ENCODE measurements at regions of chr17 and their contacts with region 1.

Region 1: GRCh38 chr17:81359218-81359617 is 36.0 kb upstream of the BAHCC1 start:
- DNase-seq: no peak
- ATAC-seq: no peak
- H3K4me3 Mint-ChIP-seq: no peak overlapping the region
- H3K27ac Mint-ChIP-seq: no peak overlapping the region
- H3K4me1 Mint-ChIP-seq: no peaks in the 10 kb centered on the region
- H3K27me3 Mint-ChIP-seq: peaks cover 36% of the 10 kb centered on the region
- CTCF ChIP-seq: no peak

Region 2: DNA sequence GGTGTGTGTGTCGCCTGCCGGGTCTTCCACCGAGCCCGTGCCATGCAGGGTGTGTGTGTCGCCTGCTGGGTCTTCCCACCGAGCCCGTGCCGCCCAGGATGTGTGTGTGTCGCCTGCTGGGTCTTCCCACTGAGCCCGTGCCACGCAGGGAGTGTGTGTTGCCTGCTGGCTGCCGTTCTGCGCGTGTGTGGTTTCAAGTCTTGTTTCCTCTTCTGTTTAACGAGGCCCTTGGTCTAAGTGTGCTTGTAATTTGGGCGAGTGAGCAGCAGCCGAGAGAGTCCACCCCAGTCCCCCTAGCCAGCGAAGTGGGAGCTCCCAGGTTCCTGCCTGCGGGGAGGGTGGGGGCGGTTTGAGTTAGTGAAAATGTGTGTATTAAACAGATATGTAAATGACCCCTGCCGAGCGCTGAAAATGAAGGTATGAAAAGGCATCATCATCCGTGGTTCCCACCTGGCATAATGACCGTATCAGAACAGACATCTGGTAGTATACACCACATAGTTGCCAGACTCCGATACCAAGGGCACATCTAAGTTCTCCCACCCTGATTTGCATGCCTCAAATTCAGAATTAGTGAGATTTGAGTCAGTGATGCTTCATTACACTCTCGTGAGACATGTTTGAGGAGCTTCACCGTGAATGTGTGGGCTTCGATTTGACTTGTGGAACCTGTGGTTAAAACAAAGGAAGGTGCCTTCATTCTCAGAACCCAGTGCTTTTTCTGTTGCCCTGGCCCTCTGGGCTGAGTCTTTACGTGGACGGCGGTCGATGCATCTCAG is 482.1 kb before region 1 on chr17:
- CTCF ChIA-PET with region 1: no interaction called
- POLR2A ChIA-PET with region 1: no interaction called
- intact Hi-C with region 1: no loop called
- DNase-seq: peak; percentile 54
- ATAC-seq: peak; percentile 91
- H3K4me3 Mint-ChIP-seq: peak overlapping the region; percentile 72
- H3K27ac Mint-ChIP-seq: peak overlapping the region; percentile 94
- H3K4me1 Mint-ChIP-seq: peaks cover 30% of the 10 kb centered on the region
- H3K27me3 Mint-ChIP-seq: no peaks in the 10 kb centered on the region
- CTCF ChIP-seq: no peak

Region 3: GRCh38 chr17:81347437-81347836 is 11.8 kb before region 1 on chr17:
- CTCF ChIA-PET with region 1: no interaction called
- POLR2A ChIA-PET with region 1: no interaction called
- intact Hi-C with region 1: no loop called
- DNase-seq: no peak
- ATAC-seq: no peak
- H3K4me3 Mint-ChIP-seq: no peak overlapping the region
- H3K27ac Mint-ChIP-seq: no peak overlapping the region
- H3K4me1 Mint-ChIP-seq: peaks cover 20% of the 10 kb centered on the region
- H3K27me3 Mint-ChIP-seq: peaks cover 22% of the 10 kb centered on the region
- CTCF ChIP-seq: no peak

Region 4: DNA sequence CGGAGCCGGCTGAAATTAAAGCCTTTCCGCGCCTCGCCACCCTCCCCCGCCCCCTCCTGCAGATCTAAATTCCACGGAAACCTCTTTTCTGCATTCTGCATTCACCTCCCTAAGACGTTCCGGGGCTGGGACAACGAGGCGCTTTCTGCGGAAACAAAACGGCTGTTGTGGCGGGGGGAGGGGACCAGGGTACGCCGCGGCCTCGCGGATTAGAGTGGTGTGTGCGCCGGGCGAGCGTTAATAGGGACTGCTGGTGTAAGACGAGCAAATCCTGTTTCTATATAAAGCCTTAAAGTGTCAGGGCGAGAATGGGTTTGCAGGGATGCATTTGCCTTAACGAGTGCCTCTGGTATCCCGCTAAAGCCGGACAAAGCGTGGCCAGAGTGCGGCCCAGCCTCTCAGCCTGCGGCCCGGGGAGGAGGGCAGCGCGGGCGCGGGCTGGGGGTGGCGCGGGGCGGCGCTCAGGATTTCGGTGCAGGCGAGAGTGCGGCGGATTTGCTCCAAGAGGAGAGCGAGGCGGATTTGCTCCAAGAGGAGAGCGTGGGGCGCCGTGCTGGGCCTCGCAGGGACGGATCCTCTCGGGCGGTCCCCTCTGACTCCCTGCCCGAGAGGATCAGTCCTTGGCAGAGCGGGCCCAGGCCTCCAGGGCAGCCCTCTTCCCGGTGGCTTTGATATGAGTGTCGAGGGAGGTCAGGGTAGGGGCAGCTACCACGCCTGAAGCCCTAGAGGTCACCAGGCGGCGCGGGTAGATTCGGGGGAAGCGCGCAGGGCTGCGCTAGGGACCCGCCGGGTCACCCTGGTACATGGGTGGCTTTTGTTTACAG is 41.1 kb after region 1 on chr17:
- CTCF ChIA-PET with region 1: no interaction called
- POLR2A ChIA-PET with region 1: interaction called, 10 read pairs
- intact Hi-C with region 1: no loop called
- DNase-seq: no peak
- ATAC-seq: no peak
- H3K4me3 Mint-ChIP-seq: peak overlapping the region; percentile 78
- H3K27ac Mint-ChIP-seq: peak overlapping the region; percentile 56
- H3K4me1 Mint-ChIP-seq: peaks cover 22% of the 10 kb centered on the region
- H3K27me3 Mint-ChIP-seq: peaks cover 21% of the 10 kb centered on the region
- CTCF ChIP-seq: no peak

Measured in activated B cell treated with CpG ODN at 0.5 μM for 24 hours (primary cell).